Astrocyte of the cerebellum (primary cell): ENCODE measurements at regions of chr3 and their contacts with region 1.

Region 1: GRCh38 chr3:27134165-27134796 is 234.9 kb downstream of the NEK10 start:
- DNase-seq: peak; percentile 64
- H3K4me3 ChIP-seq: no peak overlapping the region
- CTCF ChIP-seq: peak; percentile 90

Region 2: DNA sequence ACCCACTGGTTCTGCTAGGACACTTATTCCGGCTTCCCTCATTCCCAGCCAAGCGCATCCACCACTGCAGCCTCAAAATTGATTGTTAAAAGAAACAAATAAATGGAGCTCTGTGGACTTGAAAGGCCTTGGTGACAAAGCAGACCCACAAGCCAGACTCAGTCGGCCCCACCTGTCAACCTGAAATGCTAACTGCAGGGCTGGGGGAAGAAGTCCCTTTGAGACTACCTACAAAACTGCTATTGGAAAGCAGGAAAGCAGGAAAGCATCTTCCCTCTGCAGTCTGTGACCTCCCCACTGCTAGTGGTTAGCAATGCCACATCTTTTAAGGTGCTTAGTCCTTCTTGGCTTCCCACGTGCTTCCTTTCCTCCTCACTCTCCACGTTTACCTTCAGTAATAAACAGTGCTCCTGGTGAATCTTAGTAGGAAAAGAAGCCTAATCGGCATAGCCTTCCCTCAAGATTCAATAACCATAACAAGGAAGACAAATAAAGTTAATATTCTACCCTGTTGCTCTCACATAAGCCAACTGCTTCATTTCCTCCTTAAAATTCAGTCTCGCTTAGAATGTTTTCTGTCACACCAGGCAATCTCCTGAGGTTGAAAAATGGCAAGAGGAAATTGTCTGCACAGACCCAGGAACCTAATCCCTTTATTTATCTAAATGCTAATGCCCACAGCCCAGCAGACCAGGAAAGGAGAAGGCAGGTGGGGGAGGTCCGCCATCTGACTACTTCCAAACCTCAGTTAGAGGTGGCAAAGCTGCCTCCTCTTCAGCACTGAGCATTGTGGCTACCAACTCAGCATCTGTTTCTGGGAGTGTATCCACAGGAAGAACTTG is 61.2 kb before region 1 on chr3:
- in situ Hi-C with region 1: no loop called
- DNase-seq: no peak
- H3K4me3 ChIP-seq: no peak overlapping the region
- CTCF ChIP-seq: no peak

Region 3: DNA sequence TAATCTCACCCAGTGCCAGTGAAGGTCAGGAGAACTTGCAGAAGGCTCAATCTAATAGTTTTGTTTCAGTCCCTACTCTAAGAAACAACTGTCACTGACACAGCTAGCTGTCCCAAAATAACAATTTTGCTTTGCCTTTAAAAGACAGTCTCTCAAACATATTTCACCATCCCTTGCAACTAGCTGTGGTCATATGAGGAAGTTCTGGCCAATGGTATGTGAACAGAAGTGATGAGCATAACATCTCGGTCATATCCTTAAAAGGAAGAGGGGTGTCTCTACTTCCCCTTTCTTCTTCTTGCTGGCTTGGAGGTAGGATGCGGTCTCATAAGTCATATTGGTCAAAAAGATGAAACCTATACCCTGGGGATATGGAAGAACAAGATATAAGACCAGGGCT is 36.8 kb after region 1 on chr3:
- in situ Hi-C with region 1: no loop called
- DNase-seq: no peak
- H3K4me3 ChIP-seq: no peak overlapping the region
- CTCF ChIP-seq: no peak

Region 4: GRCh38 chr3:27271890-27272289 is 137.6 kb after region 1 on chr3:
- in situ Hi-C with region 1: loop called (anchors 5 kb)
- DNase-seq: no peak
- H3K4me3 ChIP-seq: no peak overlapping the region
- CTCF ChIP-seq: no peak

Region 5: GRCh38 chr3:27467545-27467944 is 333.3 kb after region 1 on chr3:
- in situ Hi-C with region 1: loop called (anchors 25 kb)
- DNase-seq: no peak
- H3K4me3 ChIP-seq: no peak overlapping the region
- CTCF ChIP-seq: peak; percentile 42